WTC11 (cell line): ENCODE measurements at regions of chr11 and their contacts with region 1.

Region 1: DNA sequence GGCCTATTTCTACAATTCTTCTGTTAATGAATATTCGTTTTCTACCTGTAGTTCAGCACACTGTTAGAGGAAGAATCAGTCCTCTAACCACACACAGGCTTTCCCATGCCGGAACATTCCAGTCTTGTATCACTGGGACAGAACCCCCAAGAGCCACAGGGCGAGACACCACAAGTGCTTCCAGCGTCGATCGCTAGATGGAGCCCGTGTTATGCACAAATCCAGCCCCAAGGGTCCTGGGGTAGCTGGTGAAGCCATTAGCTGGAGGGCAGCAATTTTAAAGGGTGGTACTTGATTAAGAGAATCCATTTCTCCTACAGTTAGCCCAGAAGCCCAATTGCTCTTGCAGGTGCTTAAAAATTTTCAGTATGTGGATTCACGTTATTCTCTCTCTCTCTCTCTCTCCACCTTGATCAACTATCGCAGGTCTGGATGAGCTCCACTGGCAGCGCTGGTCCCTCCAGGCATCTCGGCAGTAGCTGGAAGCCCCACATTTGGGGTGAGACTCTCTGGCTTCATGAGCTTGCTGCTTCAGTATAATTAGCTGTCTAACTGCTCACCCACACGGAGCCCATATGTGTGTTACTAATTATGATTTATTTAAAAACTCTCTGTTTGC is 148.2 kb upstream of the SNX19 start:
- DNase-seq: peak; percentile 91
- ATAC-seq: peak; percentile 96
- H3K4me3 Mint-ChIP-seq: no peak overlapping the region
- H3K27ac Mint-ChIP-seq: no peak overlapping the region
- H3K4me1 Mint-ChIP-seq: peaks cover 43% of the 10 kb centered on the region
- H3K27me3 Mint-ChIP-seq: 0 out of 2 replicates have a peak, but pooled peaks cover 3% of the 10 kb centered on the region
- CTCF ChIP-seq: peak; percentile 63

Region 2: GRCh38 chr11:130964058-130964792 is 100.3 kb before region 1 on chr11:
- CTCF ChIA-PET with region 1: no interaction called
- POLR2A ChIA-PET with region 1: no interaction called
- DNase-seq: no peak
- ATAC-seq: peak; percentile 28; the same call in 1 of the 2 replicates
- H3K4me3 Mint-ChIP-seq: no peak overlapping the region
- H3K27ac Mint-ChIP-seq: no peak overlapping the region
- H3K4me1 Mint-ChIP-seq: no peaks in the 10 kb centered on the region
- H3K27me3 Mint-ChIP-seq: peaks cover 15% of the 10 kb centered on the region
- CTCF ChIP-seq: no peak

Region 3: GRCh38 chr11:131178596-131178995 is 114.1 kb after region 1 on chr11:
- CTCF ChIA-PET with region 1: interaction called, 17 read pairs
- POLR2A ChIA-PET with region 1: no interaction called
- DNase-seq: no peak
- ATAC-seq: no peak
- H3K4me3 Mint-ChIP-seq: no peak overlapping the region
- H3K27ac Mint-ChIP-seq: peak overlapping the region; percentile 58; the same call in 1 of the 2 replicates
- H3K4me1 Mint-ChIP-seq: peaks cover 38% of the 10 kb centered on the region
- H3K27me3 Mint-ChIP-seq: no peaks in the 10 kb centered on the region
- CTCF ChIP-seq: no peak

Region 4: GRCh38 chr11:131253656-131254151 is 189.2 kb after region 1 on chr11:
- CTCF ChIA-PET with region 1: interaction called, 16 read pairs
- POLR2A ChIA-PET with region 1: interaction called, 6 read pairs
- DNase-seq: peak; percentile 61
- ATAC-seq: peak; percentile 63
- H3K4me3 Mint-ChIP-seq: peak overlapping the region; percentile 88
- H3K27ac Mint-ChIP-seq: peak overlapping the region; percentile 100
- H3K4me1 Mint-ChIP-seq: peaks cover 67% of the 10 kb centered on the region
- H3K27me3 Mint-ChIP-seq: peaks cover 13% of the 10 kb centered on the region
- CTCF ChIP-seq: no peak

Region 5: DNA sequence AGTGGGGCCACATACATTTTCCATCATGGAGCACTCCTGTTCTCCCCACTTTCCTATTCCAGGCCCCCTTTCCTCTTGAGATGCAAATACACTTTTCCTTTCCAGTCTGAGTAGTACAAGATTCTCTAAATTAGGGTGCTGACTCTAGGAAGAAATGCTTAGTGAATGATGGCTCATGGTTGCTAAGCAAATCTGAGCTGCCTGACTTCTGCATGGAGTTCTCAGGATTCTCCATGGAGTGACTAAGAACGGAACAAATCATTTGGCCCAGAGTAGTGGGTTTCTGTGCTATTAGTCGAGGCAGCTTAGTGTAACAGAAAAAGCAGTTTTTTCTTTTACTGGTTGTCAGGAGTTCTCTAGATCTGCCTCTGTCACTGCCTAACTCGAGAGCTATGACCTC is 240.5 kb after region 1 on chr11:
- CTCF ChIA-PET with region 1: interaction called, 10 read pairs
- POLR2A ChIA-PET with region 1: no interaction called
- DNase-seq: no peak
- ATAC-seq: no peak
- H3K4me3 Mint-ChIP-seq: no peak overlapping the region
- H3K27ac Mint-ChIP-seq: no peak overlapping the region
- H3K4me1 Mint-ChIP-seq: peaks cover 10% of the 10 kb centered on the region
- H3K27me3 Mint-ChIP-seq: no peaks in the 10 kb centered on the region
- CTCF ChIP-seq: no peak

Region 6: GRCh38 chr11:131418189-131418588 is 353.7 kb after region 1 on chr11:
- CTCF ChIA-PET with region 1: interaction called, 11 read pairs
- POLR2A ChIA-PET with region 1: no interaction called
- DNase-seq: no peak
- ATAC-seq: peak; percentile 74
- H3K4me3 Mint-ChIP-seq: no peak overlapping the region
- H3K27ac Mint-ChIP-seq: no peak overlapping the region
- H3K4me1 Mint-ChIP-seq: 0 out of 2 replicates have a peak, but pooled peaks cover 2% of the 10 kb centered on the region
- H3K27me3 Mint-ChIP-seq: no peaks in the 10 kb centered on the region
- CTCF ChIP-seq: no peak

Region 7: DNA sequence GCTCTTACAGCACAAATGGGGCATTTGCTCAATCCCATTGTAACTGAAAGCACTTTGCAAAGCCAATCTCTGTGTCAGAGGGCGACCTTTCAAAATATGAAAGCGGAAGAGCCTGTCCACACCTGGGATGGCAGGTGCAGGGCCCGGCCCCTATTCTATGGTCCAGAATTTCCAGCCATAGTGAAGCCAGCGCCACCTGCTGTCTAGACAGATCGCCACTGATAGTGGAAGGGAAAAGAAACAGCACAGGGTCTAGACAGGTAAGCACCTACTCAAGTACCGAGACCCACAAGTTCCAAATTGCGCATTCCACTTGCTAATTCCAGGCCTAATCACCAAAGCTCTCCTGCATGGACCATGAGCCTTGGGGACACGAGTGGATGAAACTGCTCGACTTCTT is 447.3 kb after region 1 on chr11:
- CTCF ChIA-PET with region 1: interaction called, 39 read pairs
- POLR2A ChIA-PET with region 1: no interaction called
- DNase-seq: peak; percentile 82
- ATAC-seq: peak; percentile 97
- H3K4me3 Mint-ChIP-seq: no peak overlapping the region
- H3K27ac Mint-ChIP-seq: no peak overlapping the region
- H3K4me1 Mint-ChIP-seq: peaks cover 9% of the 10 kb centered on the region
- H3K27me3 Mint-ChIP-seq: no peaks in the 10 kb centered on the region; the same call in 1 of the 2 replicates
- CTCF ChIP-seq: peak; percentile 53; the same call in 1 of the 2 replicates